Dorsolateral prefrontal cortex (tissue), 120 donors: ENCODE measurements at regions of chr5 and their contacts with region 1.

Region 1: GRCh38 chr5:112669328-112669963 is 68.2 kb upstream of the APC start:
- DNase-seq: peak in 2 of 10 donors; percentile 37 to 51
- H3K4me3 ChIP-seq: peak overlapping the region in 10 of 59 donors; percentile 1 to 26 (median 12)
- H3K27ac ChIP-seq: peak overlapping the region in 28 of 59 donors; percentile 5 to 70 (median 36)
- H3K27me3 ChIP-seq: no peaks in the 10 kb centered on the region
- CTCF ChIP-seq: no peak

Region 2: GRCh38 chr5:112635771-112636731 is 33.4 kb before region 1 on chr5:
- intact Hi-C with region 1: loop called in 1 of 2 experiments (anchors 2 kb)
- DNase-seq: no peak
- H3K4me3 ChIP-seq: no peak overlapping the region
- H3K27ac ChIP-seq: peak overlapping the region in 44 of 59 donors; percentile 4 to 90 (median 70)
- H3K27me3 ChIP-seq: no peaks in the 10 kb centered on the region
- CTCF ChIP-seq: no peak

Region 3: GRCh38 chr5:112649882-112650281 is 19.6 kb before region 1 on chr5:
- intact Hi-C with region 1: no loop called
- DNase-seq: no peak
- H3K4me3 ChIP-seq: no peak overlapping the region
- H3K27ac ChIP-seq: no peak overlapping the region
- H3K27me3 ChIP-seq: peaks cover 0 to 4% (median 0%) of the 10 kb centered on the region in 45 donors
- CTCF ChIP-seq: no peak